Psoas muscle (tissue), 8 donors: ENCODE measurements at regions of chr17 and their contacts with region 1.

Region 1: GRCh38 chr17:61904094-61904710 is 23.6 kb downstream of the INTS2 start:
- DNase-seq: no peak
- ATAC-seq: no peak
- H3K4me3 ChIP-seq: no peak overlapping the region
- H3K27ac ChIP-seq: no peak overlapping the region
- H3K4me1 ChIP-seq: no peaks in the 10 kb centered on the region
- H3K27me3 ChIP-seq: no peaks in the 10 kb centered on the region
- CTCF ChIP-seq: no peak

Region 2: DNA sequence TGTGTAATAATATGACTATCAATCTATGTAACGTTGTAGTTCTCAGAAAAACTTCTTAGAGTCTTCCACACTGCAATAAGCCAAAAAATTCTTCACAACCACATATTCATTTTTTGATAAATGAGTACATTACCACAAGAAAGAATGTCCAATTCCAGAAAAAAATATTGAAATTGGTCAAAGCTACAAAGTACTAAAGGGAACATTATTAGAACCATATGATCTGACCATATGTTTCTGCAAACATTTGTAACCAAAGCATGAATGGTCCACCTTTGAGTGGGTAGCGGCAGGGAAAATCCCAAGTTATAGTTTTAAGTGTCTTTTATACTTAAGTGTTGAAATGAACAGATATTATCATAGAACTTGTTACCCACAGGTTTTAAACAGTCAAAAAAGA is 241.5 kb before region 1 on chr17:
- intact Hi-C with region 1: no loop called
- DNase-seq: no peak
- ATAC-seq: no peak
- H3K4me3 ChIP-seq: no peak overlapping the region
- H3K27ac ChIP-seq: no peak overlapping the region
- H3K4me1 ChIP-seq: no peaks in the 10 kb centered on the region
- H3K27me3 ChIP-seq: no peaks in the 10 kb centered on the region
- CTCF ChIP-seq: no peak

Region 3: DNA sequence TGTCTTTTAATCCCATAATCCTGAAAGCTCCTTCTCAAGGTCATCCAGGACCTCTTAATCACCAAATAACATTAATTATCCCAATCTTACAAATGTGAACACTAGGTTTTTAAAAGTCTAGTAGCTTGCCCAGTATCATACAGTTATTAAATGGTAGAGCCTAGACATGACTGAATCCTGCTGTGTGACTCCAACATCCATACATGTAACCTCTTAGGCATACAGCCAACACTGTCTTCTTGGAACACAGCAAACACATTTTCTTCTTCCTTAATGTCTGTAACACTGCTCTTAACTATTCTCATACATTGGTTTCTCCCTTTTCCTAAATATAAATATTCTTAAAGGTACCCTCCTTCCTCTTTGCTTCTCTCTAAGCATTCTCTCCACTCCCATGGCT is 54.5 kb before region 1 on chr17:
- intact Hi-C with region 1: no loop called
- DNase-seq: no peak
- ATAC-seq: no peak
- H3K4me3 ChIP-seq: no peak overlapping the region
- H3K27ac ChIP-seq: no peak overlapping the region
- H3K4me1 ChIP-seq: no peaks in the 10 kb centered on the region
- H3K27me3 ChIP-seq: no peaks in the 10 kb centered on the region
- CTCF ChIP-seq: no peak

Region 4: GRCh38 chr17:61955621-61956020 is 51.4 kb after region 1 on chr17:
- intact Hi-C with region 1: loop called in 1 of 2 experiments (anchors 10 kb)
- DNase-seq: no peak
- ATAC-seq: no peak
- H3K4me3 ChIP-seq: no peak overlapping the region
- H3K27ac ChIP-seq: no peak overlapping the region
- H3K4me1 ChIP-seq: no peaks in the 10 kb centered on the region
- H3K27me3 ChIP-seq: no peaks in the 10 kb centered on the region
- CTCF ChIP-seq: no peak